Breast epithelium (tissue), 4 donors: ENCODE measurements at regions of chr4 and their contacts with region 1.

Region 1: DNA sequence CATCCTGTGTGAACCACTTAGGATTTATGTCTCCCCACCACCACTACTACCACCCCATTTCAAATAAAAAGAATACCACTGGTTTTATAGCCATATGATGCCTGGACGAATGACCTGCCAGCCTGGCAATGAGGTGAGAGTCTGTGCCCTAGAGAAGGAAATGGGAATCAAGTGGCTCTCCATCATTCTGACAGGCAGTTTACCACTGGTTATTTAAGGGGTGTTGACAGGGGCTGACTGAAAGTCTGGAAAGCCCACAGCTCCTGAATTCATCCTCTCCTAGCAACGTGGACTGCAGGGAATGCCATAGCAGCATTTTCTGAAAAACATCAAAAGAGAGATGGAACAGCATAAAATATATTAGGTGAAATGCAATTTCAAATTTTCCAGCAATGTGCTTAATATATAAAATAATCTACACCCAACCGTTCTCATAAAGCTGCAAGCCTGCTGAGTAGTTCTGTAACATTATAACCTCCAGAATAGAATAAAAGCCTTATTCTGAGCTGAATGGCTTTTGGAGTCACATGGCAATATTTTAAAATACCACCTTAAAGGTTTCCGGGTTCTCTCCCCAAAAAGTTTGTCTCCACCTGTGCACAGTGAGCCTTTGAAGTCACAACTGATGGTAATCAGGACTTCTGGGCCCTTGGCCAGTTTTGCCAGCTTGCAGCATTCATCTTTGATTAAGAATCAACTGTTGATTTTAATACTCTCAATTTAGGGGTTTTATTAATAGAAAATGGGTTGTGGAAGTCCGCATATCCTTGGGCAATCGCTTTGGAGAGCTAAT is 121.5 kb downstream of the DCTD start:
- DNase-seq: no peak
- H3K4me3 ChIP-seq: no peak overlapping the region
- H3K27ac ChIP-seq: no peak overlapping the region
- H3K4me1 ChIP-seq: peaks cover 0 to 6% of the 10 kb centered on the region in 2 donors
- H3K27me3 ChIP-seq: no peaks in the 10 kb centered on the region
- CTCF ChIP-seq: no peak
- POLR2A ChIP-seq: no peak

Region 2: DNA sequence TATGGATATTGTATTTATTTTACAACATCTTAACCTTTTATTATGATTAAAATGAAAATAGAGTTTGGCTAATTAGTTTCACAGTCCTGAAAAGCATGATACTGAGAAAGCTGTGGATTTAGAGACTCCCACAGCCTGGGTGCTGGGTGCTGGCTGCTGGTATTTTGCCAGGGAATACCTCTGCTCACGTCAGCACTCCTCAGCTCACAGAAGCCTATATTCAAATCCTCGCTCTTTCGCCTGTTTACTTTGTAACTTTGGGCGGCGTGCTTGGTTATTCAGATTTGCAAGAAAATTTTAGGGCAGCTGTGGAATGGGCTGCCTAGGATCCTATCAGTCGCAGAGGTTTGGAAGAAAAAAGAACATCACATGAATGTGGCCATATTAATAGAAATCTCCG is 140.3 kb before region 1 on chr4:
- intact Hi-C with region 1: loop called (anchors 5 kb)
- DNase-seq: no peak
- H3K4me3 ChIP-seq: no peak overlapping the region
- H3K27ac ChIP-seq: no peak overlapping the region
- H3K4me1 ChIP-seq: no peaks in the 10 kb centered on the region
- H3K27me3 ChIP-seq: no peaks in the 10 kb centered on the region
- CTCF ChIP-seq: no peak
- POLR2A ChIP-seq: no peak

Region 3: GRCh38 chr4:183214912-183215488 is 419.4 kb after region 1 on chr4:
- intact Hi-C with region 1: loop called (anchors 5 kb)
- DNase-seq: no peak
- H3K4me3 ChIP-seq: no peak overlapping the region
- H3K27ac ChIP-seq: no peak overlapping the region
- H3K4me1 ChIP-seq: no peaks in the 10 kb centered on the region
- H3K27me3 ChIP-seq: no peaks in the 10 kb centered on the region
- CTCF ChIP-seq: no peak
- POLR2A ChIP-seq: no peak